ENCODE measurements at regions of chr12 and their contacts with region 1.

Region 1: DNA sequence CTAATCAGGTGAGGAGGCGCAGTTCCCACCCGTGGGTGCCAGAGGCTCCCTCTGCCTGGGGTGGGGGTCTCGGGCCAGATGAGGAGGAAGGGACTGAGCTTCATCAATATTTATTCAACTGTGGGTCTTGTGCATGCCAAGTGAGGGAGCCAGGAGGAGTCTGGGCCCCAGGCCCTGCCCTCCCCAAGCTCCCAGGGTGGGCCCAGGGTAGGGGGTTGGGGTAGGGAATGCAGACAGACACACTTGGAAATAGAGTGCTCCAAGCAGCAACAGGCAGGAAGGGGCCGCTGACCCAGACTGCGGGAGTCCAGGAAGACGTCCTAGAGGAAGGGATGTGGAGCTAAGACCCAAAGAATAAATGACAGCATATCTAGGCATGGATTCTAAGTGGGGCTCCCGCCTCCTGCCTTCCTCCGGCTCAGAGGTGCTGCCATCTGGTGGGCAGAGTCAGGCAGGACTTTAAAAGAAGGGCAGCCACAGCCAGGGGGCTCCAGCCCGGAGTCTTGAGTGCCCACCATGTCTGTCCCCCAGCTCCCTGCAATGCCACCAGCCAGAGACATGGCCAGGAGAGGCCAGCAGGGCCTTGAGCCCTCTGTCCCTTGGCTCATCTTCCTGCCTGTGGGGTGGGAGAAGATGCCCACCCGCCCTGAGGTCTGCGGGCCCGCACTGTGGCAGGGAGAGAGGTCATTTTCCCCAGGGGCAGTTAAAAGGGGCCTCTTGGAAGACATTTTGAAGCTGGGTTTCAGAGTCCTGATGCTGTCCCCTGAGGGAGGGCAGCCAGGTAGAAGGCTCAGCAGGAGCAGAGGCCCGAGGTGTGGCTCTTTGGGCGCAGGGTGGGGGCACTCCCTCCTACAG is 70.1 kb downstream of the PHETA1 start:
- DNase-seq: no peak
- H3K4me3 ChIP-seq: no peak overlapping the region
- H3K27me3 ChIP-seq: no peaks in the 10 kb centered on the region
- CTCF ChIP-seq: peak; percentile 90

Region 2: GRCh38 chr12:110896559-110896958 is 402.2 kb before region 1 on chr12:
- CTCF ChIA-PET with region 1: interaction called, 26 read pairs
- POLR2A ChIA-PET with region 1: no interaction called
- DNase-seq: no peak
- H3K4me3 ChIP-seq: no peak overlapping the region
- H3K27me3 ChIP-seq: no peaks in the 10 kb centered on the region
- CTCF ChIP-seq: no peak

Region 3: GRCh38 chr12:111261911-111262676 is 36.7 kb before region 1 on chr12:
- CTCF ChIA-PET with region 1: no interaction called
- POLR2A ChIA-PET with region 1: no interaction called
- DNase-seq: no peak
- H3K4me3 ChIP-seq: no peak overlapping the region
- H3K27me3 ChIP-seq: no peaks in the 10 kb centered on the region
- CTCF ChIP-seq: no peak

Region 4: DNA sequence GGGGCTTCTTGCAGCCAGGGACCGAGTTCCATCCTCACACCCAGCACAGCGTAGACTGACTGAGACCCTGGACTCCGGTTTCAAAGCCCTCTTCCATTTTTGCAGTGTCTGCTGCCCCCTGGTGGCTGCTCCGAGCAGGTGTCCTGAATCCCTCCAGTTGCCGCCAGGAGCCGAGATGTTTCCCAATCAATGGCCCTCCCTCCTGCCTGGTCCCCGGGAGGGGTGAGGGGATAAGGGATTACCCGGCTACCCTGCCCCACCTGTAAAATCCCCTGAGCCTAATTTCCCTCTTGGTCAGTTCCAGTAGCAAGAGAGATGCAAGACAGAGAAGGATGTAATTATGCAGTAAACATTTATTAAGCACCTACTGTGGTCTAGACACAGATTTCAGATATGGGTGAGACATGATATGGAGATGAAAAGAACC is 15.0 kb after region 1 on chr12:
- CTCF ChIA-PET with region 1: interaction called, 17 read pairs
- POLR2A ChIA-PET with region 1: no interaction called
- DNase-seq: peak; percentile 6
- H3K4me3 ChIP-seq: no peak overlapping the region
- H3K27me3 ChIP-seq: 0 out of 2 replicates have a peak, but pooled peaks cover 2% of the 10 kb centered on the region
- CTCF ChIP-seq: peak; percentile 94

Region 5: GRCh38 chr12:111578274-111578970 is 279.6 kb after region 1 on chr12:
- CTCF ChIA-PET with region 1: no interaction called
- POLR2A ChIA-PET with region 1: no interaction called
- DNase-seq: no peak
- H3K4me3 ChIP-seq: no peak overlapping the region
- H3K27me3 ChIP-seq: no peaks in the 10 kb centered on the region
- CTCF ChIP-seq: no peak

Measured in BJ (cell line).